ENCODE measurements at regions of chr2 and their contacts with region 1.

Region 1: DNA sequence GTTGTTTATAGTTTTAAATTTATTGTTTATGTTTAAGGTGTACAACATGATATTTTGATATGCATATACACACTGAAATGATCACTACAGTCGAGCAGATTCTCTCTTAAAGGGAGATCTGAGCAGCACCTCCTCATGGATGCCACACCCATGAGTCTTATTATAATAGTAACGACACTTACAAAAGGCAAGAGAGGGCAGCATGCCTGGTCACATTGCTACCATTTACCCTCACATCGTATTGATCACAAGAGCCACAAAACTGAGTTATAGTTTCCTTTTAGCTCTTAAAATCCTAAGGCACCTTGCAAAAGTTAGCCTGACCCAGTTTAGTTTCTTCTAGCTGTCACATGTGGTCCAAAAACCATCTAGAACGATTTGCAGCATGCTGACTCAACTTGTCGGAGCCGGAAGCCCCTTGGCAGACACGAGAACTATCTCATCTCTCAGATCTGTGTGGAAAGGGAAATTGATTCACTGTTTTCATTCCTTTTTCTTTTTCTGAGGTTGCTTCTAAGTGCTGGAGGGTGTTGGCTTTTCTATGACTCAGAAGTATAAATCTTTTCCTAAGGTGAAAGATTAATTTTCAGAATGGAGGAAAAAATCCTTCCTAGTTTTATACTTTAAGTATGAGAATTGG is 85.3 kb downstream of the CDC42EP3 start:
- DNase-seq: peak; percentile 43 to 92
- H3K4me3 ChIP-seq: peak overlapping the region; percentile 12; the same call in 1 of the 2 replicates
- H3K27ac ChIP-seq: peak overlapping the region; percentile 94
- H3K4me1 ChIP-seq: peaks cover 82% of the 10 kb centered on the region
- H3K27me3 ChIP-seq: no peaks in the 10 kb centered on the region
- CTCF ChIP-seq: no peak

Region 2: DNA sequence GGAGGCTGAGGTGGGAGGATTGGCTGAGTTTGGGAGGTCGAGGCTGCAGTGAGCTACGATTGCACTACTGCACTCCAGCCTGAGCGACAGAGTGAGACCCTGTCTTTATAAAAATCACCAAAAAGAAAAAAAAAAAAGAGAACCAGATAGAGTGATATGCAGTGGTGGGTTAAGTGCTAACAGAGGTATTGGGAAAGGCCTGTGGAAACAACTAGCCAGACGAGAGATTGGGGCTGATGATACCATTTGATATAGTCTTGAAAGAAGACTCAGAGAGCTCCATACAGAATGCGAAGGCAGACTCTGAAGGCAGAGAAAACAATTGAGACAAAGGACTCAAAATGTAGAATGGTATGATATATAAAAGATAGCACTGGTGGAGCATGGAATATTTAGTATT is 48.8 kb before region 1 on chr2:
- CTCF ChIA-PET with region 1: no interaction called
- POLR2A ChIA-PET with region 1: no interaction called
- intact Hi-C with region 1: loop called (anchors 1 kb)
- DNase-seq: no peak
- H3K4me3 ChIP-seq: no peak overlapping the region
- H3K27ac ChIP-seq: no peak overlapping the region
- H3K4me1 ChIP-seq: no peaks in the 10 kb centered on the region
- H3K27me3 ChIP-seq: no peaks in the 10 kb centered on the region
- CTCF ChIP-seq: no peak

Region 3: GRCh38 chr2:37600735-37601134 is 14.6 kb after region 1 on chr2:
- CTCF ChIA-PET with region 1: no interaction called
- POLR2A ChIA-PET with region 1: no interaction called
- intact Hi-C with region 1: no loop called
- DNase-seq: no peak
- H3K4me3 ChIP-seq: no peak overlapping the region
- H3K27ac ChIP-seq: no peak overlapping the region
- H3K4me1 ChIP-seq: peaks cover 11% of the 10 kb centered on the region
- H3K27me3 ChIP-seq: no peaks in the 10 kb centered on the region
- CTCF ChIP-seq: no peak

Region 4: GRCh38 chr2:37610638-37611289 is 24.7 kb after region 1 on chr2:
- CTCF ChIA-PET with region 1: no interaction called
- POLR2A ChIA-PET with region 1: interaction called, 15 read pairs
- intact Hi-C with region 1: no loop called
- DNase-seq: no peak
- H3K4me3 ChIP-seq: no peak overlapping the region
- H3K27ac ChIP-seq: no peak overlapping the region
- H3K4me1 ChIP-seq: no peaks in the 10 kb centered on the region
- H3K27me3 ChIP-seq: no peaks in the 10 kb centered on the region
- CTCF ChIP-seq: no peak

Region 5: GRCh38 chr2:37767956-37768925 is 182.1 kb after region 1 on chr2:
- CTCF ChIA-PET with region 1: interaction called, 11 read pairs
- POLR2A ChIA-PET with region 1: no interaction called
- intact Hi-C with region 1: no loop called
- DNase-seq: peak; percentile 75 to 95
- H3K4me3 ChIP-seq: peak overlapping the region; percentile 9; the same call in 1 of the 2 replicates
- H3K27ac ChIP-seq: peak overlapping the region; percentile 66
- H3K4me1 ChIP-seq: peaks cover 42% of the 10 kb centered on the region
- H3K27me3 ChIP-seq: no peaks in the 10 kb centered on the region
- CTCF ChIP-seq: no peak

Measured in PC-9 (cell line).